WTC11 (cell line): ENCODE measurements at regions of chr5 and their contacts with region 1.

Region 1: DNA sequence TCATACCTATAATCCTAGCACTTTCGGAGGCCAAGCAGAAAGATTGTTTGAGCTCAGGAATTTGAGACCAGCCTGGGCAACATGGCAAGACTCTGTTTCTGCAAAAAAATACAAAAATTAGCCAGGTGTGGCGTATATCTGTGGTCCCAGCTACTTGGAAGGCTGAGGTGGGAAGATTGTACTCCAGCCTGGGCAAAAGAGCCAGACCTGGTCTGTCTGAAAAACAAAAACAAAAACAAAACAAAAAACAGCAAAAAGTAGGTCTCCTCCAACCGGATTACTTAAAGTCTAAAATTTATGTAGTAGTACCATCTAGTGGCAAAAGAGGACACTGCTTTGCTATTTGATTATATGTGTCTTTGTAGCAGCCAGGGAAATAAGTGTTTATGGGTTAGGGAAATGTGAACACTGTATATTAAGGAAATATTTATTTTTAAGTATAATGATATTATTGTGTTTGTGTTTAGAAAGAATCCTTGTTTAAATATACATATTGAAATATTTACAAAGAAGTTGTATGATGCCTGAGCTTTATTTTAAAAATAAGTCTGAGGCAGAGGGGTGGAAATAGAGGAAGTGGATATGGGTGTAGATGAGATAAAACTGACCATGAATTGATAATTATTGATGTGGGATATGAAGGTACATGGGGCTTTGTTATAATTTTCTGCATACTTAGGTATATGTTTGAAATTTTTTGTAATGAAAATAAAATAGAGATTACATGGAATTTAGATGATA is 20.0 kb downstream of the APC start:
- DNase-seq: no peak
- ATAC-seq: peak; percentile 73
- H3K4me3 Mint-ChIP-seq: no peak overlapping the region
- H3K27ac Mint-ChIP-seq: 0 out of 2 replicates have a peak overlapping the region, but pooled peaks have one; percentile 64
- H3K4me1 Mint-ChIP-seq: no peaks in the 10 kb centered on the region
- H3K27me3 Mint-ChIP-seq: no peaks in the 10 kb centered on the region
- CTCF ChIP-seq: peak; percentile 43

Region 2: DNA sequence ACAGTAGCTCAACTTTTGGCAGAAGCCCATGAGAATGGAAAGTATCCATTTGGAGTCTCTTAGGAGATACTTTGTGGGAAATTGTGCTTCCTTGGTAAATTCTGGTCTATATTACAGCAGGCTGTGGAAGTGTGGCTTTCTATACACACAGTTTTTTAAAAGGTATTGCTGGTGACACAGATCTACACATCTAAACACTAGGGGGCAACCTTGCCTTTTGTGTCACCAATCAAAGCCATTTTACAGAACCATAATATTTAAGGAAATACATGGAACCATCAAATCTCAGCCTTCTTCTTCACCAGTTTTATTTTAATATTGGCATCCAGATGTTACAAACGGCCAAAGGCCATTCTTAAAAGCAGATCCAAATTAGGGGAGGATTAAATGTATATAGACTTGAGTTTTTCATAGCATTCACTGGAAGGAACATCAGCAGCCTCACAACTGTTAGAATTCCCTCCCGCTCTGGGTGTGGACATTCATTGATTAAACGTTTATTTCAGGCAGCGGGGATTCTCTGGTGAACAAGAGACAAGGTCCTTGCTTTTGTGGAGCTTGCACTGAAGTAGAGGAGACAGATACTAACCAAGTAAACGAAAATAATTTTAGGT is 206.1 kb before region 1 on chr5:
- CTCF ChIA-PET with region 1: interaction called, 13 read pairs
- POLR2A ChIA-PET with region 1: no interaction called
- DNase-seq: no peak
- ATAC-seq: peak; percentile 65
- H3K4me3 Mint-ChIP-seq: no peak overlapping the region
- H3K27ac Mint-ChIP-seq: no peak overlapping the region
- H3K4me1 Mint-ChIP-seq: 0 out of 2 replicates have a peak, but pooled peaks cover 3% of the 10 kb centered on the region
- H3K27me3 Mint-ChIP-seq: no peaks in the 10 kb centered on the region
- CTCF ChIP-seq: peak; percentile 52

Region 3: GRCh38 chr5:112737463-112738190 is 20.0 kb before region 1 on chr5 and contains the start of gene APC:
- CTCF ChIA-PET with region 1: interaction called, 11 read pairs
- POLR2A ChIA-PET with region 1: no interaction called
- DNase-seq: peak; percentile 92
- ATAC-seq: peak; percentile 97
- H3K4me3 Mint-ChIP-seq: peak within 1 kb of the TSS; percentile 92
- H3K27ac Mint-ChIP-seq: peak within 1 kb of the TSS; percentile 95
- H3K4me1 Mint-ChIP-seq: peaks cover 22% of the 10 kb centered on the region
- H3K27me3 Mint-ChIP-seq: no peaks in the 10 kb centered on the region
- CTCF ChIP-seq: no peak
- total RNA-seq, gene APC: 31.8 to 40.0 TPM (median 33.1 TPM) in 3 replicates

Region 4: GRCh38 chr5:112878760-112879159 is 121.1 kb after region 1 on chr5:
- CTCF ChIA-PET with region 1: no interaction called
- POLR2A ChIA-PET with region 1: no interaction called
- DNase-seq: no peak
- ATAC-seq: no peak
- H3K4me3 Mint-ChIP-seq: no peak overlapping the region
- H3K27ac Mint-ChIP-seq: peak overlapping the region; percentile 62
- H3K4me1 Mint-ChIP-seq: peaks cover 25% of the 10 kb centered on the region
- H3K27me3 Mint-ChIP-seq: no peaks in the 10 kb centered on the region
- CTCF ChIP-seq: no peak

Region 5: GRCh38 chr5:112895682-112896081 is 138.0 kb after region 1 on chr5:
- CTCF ChIA-PET with region 1: no interaction called
- POLR2A ChIA-PET with region 1: no interaction called
- DNase-seq: no peak
- ATAC-seq: no peak
- H3K4me3 Mint-ChIP-seq: no peak overlapping the region
- H3K27ac Mint-ChIP-seq: no peak overlapping the region
- H3K4me1 Mint-ChIP-seq: no peaks in the 10 kb centered on the region
- H3K27me3 Mint-ChIP-seq: no peaks in the 10 kb centered on the region
- CTCF ChIP-seq: no peak